BJ (cell line): ENCODE measurements at regions of chr1 and their contacts with region 1.

Region 1: DNA sequence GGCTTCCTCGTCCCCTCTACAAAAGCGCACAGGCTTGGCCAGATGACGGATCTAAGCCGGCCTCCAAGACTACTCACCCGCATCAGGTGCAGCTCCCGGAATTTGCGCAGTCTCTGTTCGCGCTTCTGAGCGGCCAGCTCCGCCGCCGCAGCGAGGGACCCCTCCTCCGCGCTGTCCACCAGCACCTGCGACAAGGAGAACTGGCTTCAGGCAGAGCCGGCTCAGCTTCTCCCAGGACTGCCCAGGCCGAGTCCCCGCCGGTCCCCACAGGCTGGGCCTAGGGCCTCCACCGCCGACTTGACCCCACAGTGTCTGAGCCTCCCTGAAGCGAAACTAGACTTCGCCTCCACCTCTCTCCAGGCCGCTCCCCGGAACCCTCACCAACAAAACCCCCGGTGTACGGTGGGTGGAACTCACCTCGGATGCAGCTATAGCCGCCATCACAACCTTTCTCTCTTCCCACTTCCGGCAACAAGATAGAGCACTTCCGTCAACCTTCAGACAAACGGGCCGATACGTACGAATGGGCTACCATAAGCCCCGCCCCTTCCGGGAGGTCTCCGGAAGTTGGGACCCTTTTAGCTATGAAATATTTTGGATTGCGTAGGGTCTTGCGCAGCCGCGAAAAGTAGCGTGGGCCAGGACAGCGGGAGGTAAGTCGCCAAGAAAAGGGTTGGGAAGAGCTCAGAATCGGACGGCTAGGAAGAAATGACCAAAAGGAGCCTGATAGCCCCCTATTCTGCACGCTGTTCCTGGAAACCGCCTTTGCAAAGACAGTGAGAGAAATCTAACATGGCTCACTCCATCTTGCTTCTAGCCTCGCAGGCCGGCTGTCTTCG is at the start of gene SYF2:
- DNase-seq: peak; percentile 74
- H3K4me3 ChIP-seq: peak within 1 kb of the TSS; percentile 70
- H3K27me3 ChIP-seq: no peaks in the 10 kb centered on the region
- CTCF ChIP-seq: no peak
- polyA plus RNA-seq, gene SYF2: 15.0 and 32.6 TPM in 2 replicates

Region 2: GRCh38 chr1:24964811-24965570 is 267.3 kb before region 1 on chr1:
- CTCF ChIA-PET with region 1: no interaction called
- POLR2A ChIA-PET with region 1: no interaction called
- DNase-seq: no peak
- H3K4me3 ChIP-seq: no peak overlapping the region
- H3K27me3 ChIP-seq: peaks cover 12% of the 10 kb centered on the region
- CTCF ChIP-seq: no peak

Region 3: GRCh38 chr1:24996983-24997893 is 235.0 kb before region 1 on chr1:
- CTCF ChIA-PET with region 1: no interaction called
- POLR2A ChIA-PET with region 1: interaction called, 15 read pairs
- DNase-seq: no peak
- H3K4me3 ChIP-seq: no peak overlapping the region
- H3K27me3 ChIP-seq: peaks cover 5% of the 10 kb centered on the region
- CTCF ChIP-seq: no peak

Region 4: DNA sequence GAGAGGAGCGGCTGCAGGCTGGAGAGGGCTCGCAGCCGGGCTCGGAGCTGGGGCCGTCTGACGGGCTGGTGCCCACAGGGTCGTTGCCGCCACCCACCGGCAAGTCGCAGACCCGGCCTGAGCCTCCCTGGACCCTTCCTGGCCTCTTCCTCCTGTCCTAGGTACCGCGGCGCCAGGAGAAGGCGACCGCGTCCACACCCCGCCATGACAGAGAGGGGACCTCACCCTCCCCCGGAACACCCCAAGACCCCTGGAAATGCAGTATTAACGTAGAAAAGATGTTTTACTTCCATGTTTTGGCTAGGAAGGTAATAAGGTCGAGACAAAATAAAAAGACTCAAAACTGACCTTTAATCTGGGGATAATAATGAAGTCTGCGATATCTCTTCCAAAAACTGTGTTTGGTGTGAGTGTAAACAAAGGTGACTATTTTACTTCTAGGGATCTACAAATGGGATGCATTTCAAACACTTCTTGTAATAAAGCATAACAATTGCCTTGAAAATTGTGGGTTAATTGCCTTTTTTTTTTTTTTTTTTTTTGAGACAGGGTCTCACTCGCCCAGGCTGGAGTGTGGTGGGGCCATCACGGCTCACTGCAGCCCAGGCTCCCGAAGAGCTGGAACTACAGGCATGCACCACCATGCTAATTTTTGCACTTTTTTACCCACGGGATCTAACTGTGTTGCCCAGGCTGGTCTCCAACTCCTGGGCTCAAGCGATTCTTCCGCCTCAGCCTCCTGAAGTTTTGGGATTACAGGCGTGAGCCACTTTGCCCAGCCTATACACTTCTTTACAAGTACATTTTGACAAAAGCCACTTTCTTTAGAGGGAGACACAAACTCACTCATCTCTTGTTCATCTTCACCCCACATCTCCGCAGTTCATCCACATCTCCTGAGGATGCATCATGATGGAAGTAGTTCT is 15.8 kb after region 1 on chr1:
- CTCF ChIA-PET with region 1: interaction called, 3 read pairs
- POLR2A ChIA-PET with region 1: interaction called, 11 read pairs
- DNase-seq: no peak
- H3K4me3 ChIP-seq: peak overlapping the region; percentile 89
- H3K27me3 ChIP-seq: no peaks in the 10 kb centered on the region
- CTCF ChIP-seq: peak; percentile 35; the same call in 1 of the 2 replicates